AG04449 (cell line): ENCODE measurements at regions of chr17 and their contacts with region 1.

Region 1: GRCh38 chr17:39461113-39461925 is at the start of gene CDK12:
- DNase-seq: peak; percentile 94
- H3K4me3 ChIP-seq: peak within 1 kb of the TSS; percentile 98
- CTCF ChIP-seq: no peak

Region 2: GRCh38 chr17:39450847-39451581 is 10.3 kb before region 1 on chr17 and contains the start of gene MED1:
- CTCF ChIA-PET with region 1: interaction called, 10 read pairs
- POLR2A ChIA-PET with region 1: interaction called, 43 read pairs
- DNase-seq: peak; percentile 84
- H3K4me3 ChIP-seq: peak within 1 kb of the TSS; percentile 98
- CTCF ChIP-seq: no peak

Region 3: DNA sequence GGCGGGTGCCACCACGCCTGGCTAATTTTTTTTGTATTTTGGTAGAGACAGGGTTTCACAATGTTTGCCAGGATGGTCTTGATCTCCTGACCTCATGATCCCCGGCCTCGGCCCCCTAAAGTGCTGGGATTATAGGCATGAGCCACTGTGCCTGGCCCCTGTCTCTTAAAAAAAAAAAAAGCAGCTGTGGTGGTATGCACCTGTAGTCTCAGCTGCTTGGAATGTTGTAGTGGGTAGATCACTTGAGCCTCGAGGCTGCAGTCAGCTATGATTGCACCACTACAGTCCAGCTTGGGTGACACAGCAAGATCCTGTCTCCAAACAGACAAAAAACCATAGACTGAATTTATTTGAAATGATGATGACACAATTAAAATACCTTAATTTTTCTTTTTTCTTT is 24.2 kb after region 1 on chr17:
- CTCF ChIA-PET with region 1: interaction called, 5 read pairs
- POLR2A ChIA-PET with region 1: interaction called, 11 read pairs
- DNase-seq: peak; percentile 89
- H3K4me3 ChIP-seq: no peak overlapping the region
- CTCF ChIP-seq: no peak